ENCODE measurements at regions of chr14 and their contacts with region 1.

Region 1: GRCh38 chr14:61553725-61554641 is 141.3 kb upstream of the HIF1A start:
- DNase-seq: peak; percentile 99
- ATAC-seq: peak; percentile 93
- H3K4me3 ChIP-seq: peak overlapping the region in 1 of 3 experiments; percentile 42; a peak in 2 of 6 replicates
- H3K27ac ChIP-seq: peak overlapping the region; percentile 84
- H3K4me1 ChIP-seq: peaks cover 90% of the 10 kb centered on the region
- H3K27me3 ChIP-seq: no peaks in the 10 kb centered on the region
- CTCF ChIP-seq: no peak
- EP300 ChIP-seq: peak; percentile 97 to 99
- POLR2A ChIP-seq: peak in 1 of 2 experiments; percentile 43; a peak in 2 of 4 replicates
- RAD21 ChIP-seq: no peak; the same call in 1 of the 2 replicates

Region 2: DNA sequence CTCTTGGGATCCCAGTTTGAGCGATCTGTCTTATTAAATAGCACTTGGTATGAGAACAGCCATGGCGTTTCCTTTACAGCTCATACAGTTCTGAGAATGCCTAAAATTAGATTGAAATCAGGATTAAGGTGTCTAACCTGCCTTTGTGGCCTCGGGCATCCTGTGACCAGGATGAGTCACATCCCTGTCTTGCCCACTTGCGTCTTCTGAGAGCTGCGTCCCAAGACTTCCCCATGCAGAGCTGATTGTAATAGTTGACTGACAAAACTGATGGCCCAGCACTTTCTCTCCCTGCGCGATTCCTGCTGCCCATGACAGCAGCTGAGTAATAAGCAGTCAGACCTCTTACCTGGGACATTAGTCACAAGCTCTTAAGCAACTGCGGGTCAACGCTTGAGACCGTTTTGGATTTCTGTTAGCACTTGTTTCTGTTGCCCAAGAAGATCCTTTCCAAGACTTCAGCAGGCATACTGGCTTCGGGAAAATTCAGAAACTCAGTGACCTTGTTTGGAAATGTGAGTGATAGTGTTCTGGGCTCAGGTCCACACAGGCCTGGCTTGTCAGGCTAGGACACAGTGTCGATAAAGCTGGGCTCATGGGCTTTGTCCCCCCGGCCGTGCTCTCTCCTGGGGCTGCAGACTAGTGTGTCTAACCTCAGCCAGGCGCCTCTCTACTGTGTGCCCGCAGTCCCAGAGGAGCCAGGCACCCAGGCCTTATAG is 28.5 kb before region 1 on chr14:
- CTCF ChIA-PET with region 1: no interaction called
- POLR2A ChIA-PET with region 1: interaction called, 24 read pairs
- in situ Hi-C with region 1: no loop called
- intact Hi-C with region 1: no loop called
- DNase-seq: no peak
- ATAC-seq: peak; percentile 6; the same call in 1 of the 3 replicates
- H3K4me3 ChIP-seq: no peak overlapping the region
- H3K27ac ChIP-seq: peak overlapping the region; percentile 4
- H3K4me1 ChIP-seq: peaks cover 64% of the 10 kb centered on the region
- H3K27me3 ChIP-seq: no peaks in the 10 kb centered on the region
- CTCF ChIP-seq: no peak
- EP300 ChIP-seq: no peak
- POLR2A ChIP-seq: no peak
- RAD21 ChIP-seq: no peak

Measured in HepG2 (cell line).